MCF 10A (cell line): ENCODE measurements at regions of chr13 and their contacts with region 1.

Region 1: GRCh38 chr13:111066544-111066943 is 48.6 kb upstream of the ARHGEF7 start:
- DNase-seq: no peak
- H3K4me3 Mint-ChIP-seq: peak overlapping the region; percentile 71
- H3K27ac Mint-ChIP-seq: no peak overlapping the region
- H3K4me1 Mint-ChIP-seq: no peaks in the 10 kb centered on the region
- H3K27me3 Mint-ChIP-seq: no peaks in the 10 kb centered on the region
- CTCF ChIP-seq: no peak

Region 2: DNA sequence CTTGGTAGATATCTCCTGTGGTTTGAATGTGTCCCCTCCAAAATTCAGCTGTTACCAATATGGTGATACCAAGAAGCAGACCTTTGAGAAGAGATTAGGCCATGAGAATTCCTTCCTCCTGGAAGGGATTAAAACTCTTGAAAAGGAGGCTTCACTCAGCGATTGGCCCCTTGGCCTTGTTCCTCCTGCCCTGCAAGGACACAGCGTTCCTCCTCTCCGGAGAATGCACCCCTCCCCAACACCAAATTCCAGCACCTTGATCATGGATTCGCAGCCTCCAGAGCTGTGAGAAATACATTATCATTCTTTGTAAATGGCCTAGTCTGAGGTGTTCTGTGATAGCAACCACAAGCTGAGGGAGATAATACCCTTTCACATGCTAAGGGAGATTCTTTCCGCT is 14.1 kb after region 1 on chr13:
- CTCF ChIA-PET with region 1: interaction called, 29 read pairs
- POLR2A ChIA-PET with region 1: interaction called, 3 read pairs
- intact Hi-C with region 1: no loop called
- DNase-seq: no peak
- H3K4me3 Mint-ChIP-seq: no peak overlapping the region
- H3K27ac Mint-ChIP-seq: no peak overlapping the region
- H3K4me1 Mint-ChIP-seq: no peaks in the 10 kb centered on the region
- H3K27me3 Mint-ChIP-seq: no peaks in the 10 kb centered on the region
- CTCF ChIP-seq: no peak

Region 3: GRCh38 chr13:111187960-111188541 is 121.5 kb after region 1 on chr13:
- CTCF ChIA-PET with region 1: interaction called, 11 read pairs
- POLR2A ChIA-PET with region 1: no interaction called
- intact Hi-C with region 1: no loop called
- DNase-seq: peak; percentile 63
- H3K4me3 Mint-ChIP-seq: no peak overlapping the region
- H3K27ac Mint-ChIP-seq: peak overlapping the region; percentile 67
- H3K4me1 Mint-ChIP-seq: peaks cover 18% of the 10 kb centered on the region
- H3K27me3 Mint-ChIP-seq: no peaks in the 10 kb centered on the region
- CTCF ChIP-seq: no peak

Region 4: DNA sequence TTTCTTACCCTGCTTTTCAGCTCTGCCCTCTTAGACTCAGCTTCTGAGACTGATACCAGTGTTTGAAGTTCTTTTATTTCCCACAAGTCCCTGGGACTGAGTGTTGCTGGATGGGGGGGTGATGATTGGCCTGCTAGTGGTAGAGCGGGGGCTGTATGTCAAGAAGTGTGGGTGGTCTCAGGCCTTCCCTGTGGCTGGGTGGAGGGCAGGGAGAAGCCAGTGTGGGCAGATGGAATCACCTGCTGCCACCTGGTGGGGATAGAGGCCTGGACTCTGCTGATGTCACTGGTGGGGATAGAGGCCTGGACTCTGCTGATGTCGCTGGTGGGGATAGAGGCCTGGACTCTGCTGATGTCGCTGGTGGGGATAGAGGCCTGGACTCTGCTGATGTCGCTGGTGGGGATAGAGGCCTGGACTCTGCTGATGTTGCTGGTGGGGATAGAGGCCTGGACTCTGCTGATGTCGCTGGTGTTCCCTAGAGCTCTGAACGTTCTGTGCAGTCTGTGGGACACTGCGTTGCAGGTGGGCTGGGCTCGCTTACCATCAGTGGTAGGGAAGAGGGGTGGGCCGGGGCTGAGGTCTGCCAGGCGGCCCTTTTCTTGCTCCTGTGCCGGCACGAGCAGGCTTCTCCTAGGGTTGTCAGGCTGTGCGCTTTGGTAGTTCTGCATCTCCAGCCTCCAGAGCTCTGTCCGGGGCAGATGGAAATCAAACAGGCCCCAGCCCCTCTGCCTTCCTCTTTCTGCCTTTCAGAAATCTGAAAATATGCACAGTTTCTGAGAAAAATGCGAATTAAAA is 149.8 kb after region 1 on chr13:
- CTCF ChIA-PET with region 1: interaction called, 22 read pairs
- POLR2A ChIA-PET with region 1: no interaction called
- intact Hi-C with region 1: no loop called
- DNase-seq: peak; percentile 30
- H3K4me3 Mint-ChIP-seq: no peak overlapping the region
- H3K27ac Mint-ChIP-seq: no peak overlapping the region
- H3K4me1 Mint-ChIP-seq: peaks cover 12% of the 10 kb centered on the region
- H3K27me3 Mint-ChIP-seq: no peaks in the 10 kb centered on the region
- CTCF ChIP-seq: peak; percentile 39

Region 5: GRCh38 chr13:111460548-111461444 is 394.3 kb after region 1 on chr13:
- CTCF ChIA-PET with region 1: interaction called, 5 read pairs
- POLR2A ChIA-PET with region 1: interaction called, 3 read pairs
- intact Hi-C with region 1: loop called (anchors 5 kb)
- DNase-seq: peak; percentile 40
- H3K4me3 Mint-ChIP-seq: no peak overlapping the region
- H3K27ac Mint-ChIP-seq: no peak overlapping the region
- H3K4me1 Mint-ChIP-seq: no peaks in the 10 kb centered on the region
- H3K27me3 Mint-ChIP-seq: no peaks in the 10 kb centered on the region
- CTCF ChIP-seq: no peak